Activated naive CD8-positive, alpha-beta T cell treated with anti-CD3 and anti-CD28 coated beads, Interleukin-2, amount 10 ng/mL, durations not matched to agents 7 days and 5 days (primary cell): ENCODE measurements at regions of chrX and their contacts with region 1.

Region 1: GRCh38 chrX:49043220-49043986 is at the start of gene TFE3:
- DNase-seq: peak; percentile 87
- ATAC-seq: peak; percentile 88
- H3K4me3 Mint-ChIP-seq: peak within 1 kb of the TSS; percentile 91
- H3K27ac Mint-ChIP-seq: peak within 1 kb of the TSS; percentile 91
- H3K4me1 Mint-ChIP-seq: peaks cover 26% of the 10 kb centered on the region
- H3K27me3 Mint-ChIP-seq: peaks cover 2% of the 10 kb centered on the region
- total RNA-seq, gene TFE3: 26.1 to 29.0 TPM

Region 2: GRCh38 chrX:48957827-48958634 is 85.4 kb before region 1 on chrX:
- POLR2A ChIA-PET with region 1: interaction called, 19 read pairs
- DNase-seq: peak; percentile 92
- ATAC-seq: peak; percentile 86
- H3K4me3 Mint-ChIP-seq: peak overlapping the region; percentile 98
- H3K27ac Mint-ChIP-seq: peak overlapping the region; percentile 100
- H3K4me1 Mint-ChIP-seq: peaks cover 8% of the 10 kb centered on the region
- H3K27me3 Mint-ChIP-seq: no peaks in the 10 kb centered on the region

Region 3: GRCh38 chrX:49067283-49068120 is 24.1 kb after region 1 on chrX:
- POLR2A ChIA-PET with region 1: no interaction called
- DNase-seq: no peak
- ATAC-seq: no peak
- H3K4me3 Mint-ChIP-seq: no peak overlapping the region
- H3K27ac Mint-ChIP-seq: no peak overlapping the region
- H3K4me1 Mint-ChIP-seq: no peaks in the 10 kb centered on the region
- H3K27me3 Mint-ChIP-seq: no peaks in the 10 kb centered on the region